ENCODE measurements at regions of chr15 and their contacts with region 1.

Region 1: GRCh38 chr15:63048115-63048775 is 5.7 kb downstream of the TPM1 start:
- DNase-seq: no peak
- H3K4me3 ChIP-seq: peak overlapping the region; percentile 91
- CTCF ChIP-seq: peak; percentile 93

Region 2: DNA sequence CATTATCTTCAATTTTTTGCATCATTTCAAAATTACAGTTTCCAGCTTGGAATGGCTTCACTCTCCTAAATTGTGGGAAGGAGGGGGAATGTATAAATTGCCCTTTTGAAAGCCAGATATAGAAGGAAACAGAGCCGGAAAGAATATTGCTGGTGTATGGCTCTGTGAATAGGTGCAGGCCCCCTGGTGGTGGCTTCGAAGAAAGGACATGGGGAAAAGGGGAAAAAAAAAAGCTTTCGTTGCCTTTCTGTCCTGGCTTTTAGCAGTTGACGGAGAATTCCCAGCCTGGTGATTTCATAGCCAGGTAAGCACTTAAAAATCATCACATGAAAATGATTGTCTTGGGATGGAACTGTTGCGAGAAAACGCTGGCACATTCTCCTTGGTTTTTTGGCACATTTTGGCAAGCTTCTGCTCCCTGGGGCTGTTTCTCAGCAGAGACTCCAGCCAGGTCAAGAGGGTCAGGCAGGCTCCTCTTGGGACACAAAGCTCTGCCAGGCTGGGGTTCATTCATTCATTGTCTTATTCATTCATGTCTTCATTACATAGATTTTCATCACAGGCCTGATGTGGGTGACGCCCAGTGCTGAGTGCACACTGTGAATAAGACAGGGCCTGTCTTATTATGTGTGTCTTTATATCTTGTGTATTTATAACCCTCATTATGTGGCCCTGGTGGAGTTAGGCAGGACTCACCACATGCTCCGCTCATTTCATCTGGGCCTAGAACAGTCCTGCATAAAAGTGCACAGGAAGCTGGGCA is 305.7 kb before region 1 on chr15:
- CTCF ChIA-PET with region 1: interaction called, 20 read pairs
- POLR2A ChIA-PET with region 1: no interaction called
- DNase-seq: peak; percentile 68
- H3K4me3 ChIP-seq: no peak overlapping the region
- CTCF ChIP-seq: peak; percentile 76

Region 3: GRCh38 chr15:62847900-62848489 is 200.2 kb before region 1 on chr15:
- CTCF ChIA-PET with region 1: interaction called, 57 read pairs
- POLR2A ChIA-PET with region 1: interaction called, 35 read pairs
- DNase-seq: no peak
- H3K4me3 ChIP-seq: no peak overlapping the region
- CTCF ChIP-seq: peak; percentile 45

Region 4: GRCh38 chr15:62896978-62897647 is 151.1 kb before region 1 on chr15:
- CTCF ChIA-PET with region 1: interaction called, 8 read pairs
- POLR2A ChIA-PET with region 1: interaction called, 19 read pairs
- DNase-seq: peak; percentile 97
- H3K4me3 ChIP-seq: no peak overlapping the region
- CTCF ChIP-seq: no peak

Region 5: GRCh38 chr15:62940755-62941361 is 107.4 kb before region 1 on chr15:
- CTCF ChIA-PET with region 1: interaction called, 8 read pairs
- POLR2A ChIA-PET with region 1: interaction called, 82 read pairs
- DNase-seq: peak; percentile 89
- H3K4me3 ChIP-seq: peak overlapping the region; percentile 24
- CTCF ChIP-seq: no peak

Region 6: DNA sequence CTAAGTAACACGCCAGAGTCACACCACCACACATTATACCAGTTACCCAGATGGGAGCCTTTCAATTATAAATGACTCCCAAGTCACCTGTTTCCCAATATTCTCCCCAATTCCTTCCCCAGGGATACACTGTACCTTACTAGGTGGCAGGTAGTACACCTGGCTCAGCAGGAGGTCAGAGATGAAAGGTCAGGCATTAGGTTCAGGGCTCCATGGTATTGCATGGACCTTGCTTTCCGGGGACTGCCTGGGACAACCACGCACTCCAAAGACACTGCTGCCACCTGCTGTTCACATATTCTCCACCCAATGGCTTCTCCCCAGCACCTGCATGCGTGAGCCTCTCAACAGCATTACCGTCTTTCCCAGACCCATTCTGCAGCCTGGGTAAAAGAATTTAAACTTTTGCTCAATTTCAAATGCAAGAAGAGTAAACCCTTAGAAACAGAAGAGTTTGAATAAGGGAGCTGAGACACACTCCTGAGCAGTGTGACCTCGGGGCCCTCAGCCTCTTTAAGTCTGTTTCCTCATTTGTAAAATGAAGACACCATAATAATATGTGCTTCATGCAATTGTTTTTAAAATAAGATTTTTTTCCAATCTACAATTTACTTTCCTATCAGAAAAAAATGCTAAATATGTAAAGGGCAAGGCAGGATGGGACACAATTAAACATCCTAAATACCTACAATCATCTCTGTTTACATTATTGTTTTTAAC is 45.4 kb after region 1 on chr15:
- CTCF ChIA-PET with region 1: interaction called, 23 read pairs
- POLR2A ChIA-PET with region 1: interaction called, 4 read pairs
- DNase-seq: no peak
- H3K4me3 ChIP-seq: no peak overlapping the region
- CTCF ChIP-seq: peak; percentile 87